ENCODE measurements at regions of chr6 and their contacts with region 1.

Region 1: DNA sequence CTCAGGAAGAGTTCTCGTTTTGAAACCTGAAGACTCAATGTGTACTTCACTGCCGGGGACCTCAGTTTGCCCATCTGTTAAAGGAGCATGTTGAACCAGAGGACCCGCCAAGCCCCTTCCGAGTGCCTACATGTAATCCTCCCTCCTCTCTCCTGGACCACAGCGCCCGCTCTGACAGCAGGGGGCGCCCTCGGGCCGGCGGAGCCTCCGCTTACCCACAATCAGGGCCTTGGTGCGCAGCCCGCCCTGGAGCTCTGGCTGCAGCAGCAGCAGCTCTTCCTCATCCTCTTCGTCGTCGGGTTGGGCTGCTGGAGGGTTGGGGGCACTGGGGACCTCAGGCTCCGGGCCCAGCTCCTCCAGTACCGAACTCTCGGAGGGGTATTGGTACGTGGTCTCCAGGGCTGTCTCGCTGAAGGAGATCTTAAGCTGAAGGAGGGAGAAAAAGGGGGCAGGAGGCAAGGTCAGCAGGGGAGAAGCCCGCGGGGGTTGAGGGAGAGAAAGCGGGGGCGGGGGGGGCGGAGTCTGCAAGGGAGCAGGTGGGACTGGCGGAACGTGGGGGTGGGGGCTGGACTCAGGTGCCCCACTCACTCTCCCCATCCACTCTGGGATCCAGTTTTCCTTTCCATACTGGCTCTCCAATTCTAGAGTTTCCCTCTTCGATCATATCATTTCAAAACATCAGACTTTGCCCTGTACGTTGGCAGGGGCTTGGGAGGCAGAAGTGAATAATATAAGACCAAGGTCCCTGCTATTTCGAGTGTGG is 6.3 kb upstream of the DHX16 start:
- DNase-seq: peak; percentile 91
- H3K4me3 ChIP-seq: peak overlapping the region; percentile 53
- H3K27ac ChIP-seq: peak overlapping the region; percentile 84
- H3K4me1 ChIP-seq: peaks cover 4% of the 10 kb centered on the region
- H3K27me3 ChIP-seq: no peaks in the 10 kb centered on the region
- CTCF ChIP-seq: peak; percentile 85

Region 2: GRCh38 chr6:30616811-30617564 is 62.2 kb before region 1 on chr6 and contains the start of gene PPP1R10:
- intact Hi-C with region 1: no loop called
- DNase-seq: peak; percentile 99
- H3K4me3 ChIP-seq: peak within 1 kb of the TSS; percentile 63
- H3K27ac ChIP-seq: peak within 1 kb of the TSS; percentile 93
- H3K4me1 ChIP-seq: peaks cover 4% of the 10 kb centered on the region
- H3K27me3 ChIP-seq: no peaks in the 10 kb centered on the region
- CTCF ChIP-seq: no peak
- total RNA-seq, gene PPP1R10: 46.9 to 78.2 TPM

Region 3: DNA sequence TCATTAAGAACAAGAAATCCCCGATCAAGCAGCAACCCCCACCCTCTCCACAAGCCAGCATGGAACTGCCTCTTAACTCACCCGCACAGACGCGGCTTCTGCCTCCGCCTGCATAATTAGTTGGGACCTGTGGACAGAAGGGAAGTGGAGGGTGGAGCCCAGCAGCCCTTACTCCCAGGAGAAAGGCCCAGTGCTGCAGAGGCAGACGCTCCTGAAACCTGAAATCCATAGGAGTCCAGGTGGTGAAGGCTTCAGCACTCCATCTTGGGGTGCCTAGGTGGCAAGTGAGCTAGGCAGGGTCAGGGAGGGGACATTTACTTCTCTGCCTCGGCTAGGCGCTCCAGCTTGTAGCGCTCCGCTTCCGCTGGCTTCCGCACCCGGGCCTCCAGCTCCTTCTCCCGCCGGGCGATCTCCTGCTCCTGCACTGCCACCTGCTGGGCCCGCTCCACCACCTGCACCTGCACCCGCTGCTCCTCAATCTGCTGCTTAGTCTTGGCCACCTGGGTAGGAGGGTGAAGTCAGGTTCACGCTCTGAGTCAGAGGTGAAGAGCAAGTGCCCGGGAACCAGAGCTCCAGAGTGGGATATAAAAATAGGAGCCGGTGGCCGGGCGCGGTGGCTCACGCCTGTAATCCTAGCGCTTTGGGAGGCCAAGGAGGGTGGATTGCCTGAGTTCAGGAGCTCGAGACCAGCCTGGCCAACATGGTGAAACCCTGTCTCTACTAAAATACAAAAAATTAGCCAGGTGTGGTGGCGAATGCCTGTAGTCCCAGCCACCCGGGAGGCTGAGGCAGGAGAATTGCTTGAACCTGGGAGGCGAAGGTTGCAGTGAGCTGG is 51.7 kb after region 1 on chr6:
- intact Hi-C with region 1: loop called (anchors 2 kb)
- DNase-seq: peak; percentile 86
- H3K4me3 ChIP-seq: no peak overlapping the region
- H3K27ac ChIP-seq: no peak overlapping the region
- H3K4me1 ChIP-seq: peaks cover 8% of the 10 kb centered on the region
- H3K27me3 ChIP-seq: no peaks in the 10 kb centered on the region
- CTCF ChIP-seq: peak; percentile 69

Region 4: GRCh38 chr6:31020057-31020456 is 340.9 kb after region 1 on chr6:
- intact Hi-C with region 1: no loop called
- DNase-seq: no peak
- H3K4me3 ChIP-seq: no peak overlapping the region
- H3K27ac ChIP-seq: no peak overlapping the region
- H3K4me1 ChIP-seq: no peaks in the 10 kb centered on the region
- H3K27me3 ChIP-seq: no peaks in the 10 kb centered on the region
- CTCF ChIP-seq: no peak